PC-9 (cell line): ENCODE measurements at regions of chr14 and their contacts with region 1.

Region 1: GRCh38 chr14:37709419-37710195 is 114.2 kb downstream of the TTC6 start:
- DNase-seq: no peak
- H3K4me3 ChIP-seq: no peak overlapping the region
- H3K27ac ChIP-seq: no peak overlapping the region
- H3K4me1 ChIP-seq: peaks cover 8% of the 10 kb centered on the region; the same call in 1 of the 2 replicates
- H3K27me3 ChIP-seq: no peaks in the 10 kb centered on the region
- CTCF ChIP-seq: peak; percentile 53

Region 2: DNA sequence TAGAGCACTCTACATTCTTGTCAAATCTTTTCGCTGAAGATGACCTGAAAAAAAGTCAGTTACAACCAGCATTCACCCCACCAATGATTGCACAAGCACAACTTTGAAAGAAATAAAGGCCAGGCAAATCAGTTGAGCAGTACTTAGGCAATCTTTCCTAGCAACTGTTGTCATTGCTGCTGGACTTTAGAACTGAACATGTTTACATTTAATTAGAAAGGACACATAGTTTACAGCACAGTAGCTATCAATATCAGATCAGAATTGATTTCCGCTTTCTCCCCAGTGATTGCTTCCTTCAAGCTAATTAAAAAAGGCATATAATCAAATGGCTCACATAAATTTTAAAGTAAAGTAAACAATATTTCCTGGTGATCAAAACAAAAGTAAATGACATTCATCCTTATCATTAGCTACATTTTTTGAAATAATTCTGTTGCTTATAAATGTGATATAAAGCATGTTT is 243.0 kb before region 1 on chr14:
- CTCF ChIA-PET with region 1: no interaction called
- POLR2A ChIA-PET with region 1: no interaction called
- intact Hi-C with region 1: no loop called
- DNase-seq: no peak
- H3K4me3 ChIP-seq: no peak overlapping the region
- H3K27ac ChIP-seq: no peak overlapping the region
- H3K4me1 ChIP-seq: 0 out of 2 replicates have a peak, but pooled peaks cover 7% of the 10 kb centered on the region
- H3K27me3 ChIP-seq: no peaks in the 10 kb centered on the region
- CTCF ChIP-seq: no peak

Region 3: GRCh38 chr14:37874429-37875191 is 165.0 kb after region 1 on chr14:
- CTCF ChIA-PET with region 1: no interaction called
- POLR2A ChIA-PET with region 1: no interaction called
- intact Hi-C with region 1: loop called (anchors 2 kb)
- DNase-seq: peak; percentile 51 to 76
- H3K4me3 ChIP-seq: no peak overlapping the region
- H3K27ac ChIP-seq: no peak overlapping the region
- H3K4me1 ChIP-seq: no peaks in the 10 kb centered on the region
- H3K27me3 ChIP-seq: no peaks in the 10 kb centered on the region
- CTCF ChIP-seq: peak; percentile 85